ENCODE measurements at regions of chr11 and their contacts with region 1.

Region 1: GRCh38 chr11:47642099-47642855 is at the start of gene MTCH2:
- DNase-seq: peak; percentile 95 to 97 (median 96)
- H3K4me3 ChIP-seq: peak within 1 kb of the TSS; percentile 63
- H3K27ac ChIP-seq: peak within 1 kb of the TSS; percentile 85 to 88
- H3K4me1 ChIP-seq: peaks cover 7% of the 10 kb centered on the region
- H3K27me3 ChIP-seq: no peaks in the 10 kb centered on the region
- CTCF ChIP-seq: peak in 2 of 3 donors; percentile 19 to 62
- EP300 ChIP-seq: peak; percentile 56
- POLR2A ChIP-seq: peak; percentile 64
- total RNA-seq, gene MTCH2: 13.0 to 44.1 (median 38.8) TPM

Region 2: DNA sequence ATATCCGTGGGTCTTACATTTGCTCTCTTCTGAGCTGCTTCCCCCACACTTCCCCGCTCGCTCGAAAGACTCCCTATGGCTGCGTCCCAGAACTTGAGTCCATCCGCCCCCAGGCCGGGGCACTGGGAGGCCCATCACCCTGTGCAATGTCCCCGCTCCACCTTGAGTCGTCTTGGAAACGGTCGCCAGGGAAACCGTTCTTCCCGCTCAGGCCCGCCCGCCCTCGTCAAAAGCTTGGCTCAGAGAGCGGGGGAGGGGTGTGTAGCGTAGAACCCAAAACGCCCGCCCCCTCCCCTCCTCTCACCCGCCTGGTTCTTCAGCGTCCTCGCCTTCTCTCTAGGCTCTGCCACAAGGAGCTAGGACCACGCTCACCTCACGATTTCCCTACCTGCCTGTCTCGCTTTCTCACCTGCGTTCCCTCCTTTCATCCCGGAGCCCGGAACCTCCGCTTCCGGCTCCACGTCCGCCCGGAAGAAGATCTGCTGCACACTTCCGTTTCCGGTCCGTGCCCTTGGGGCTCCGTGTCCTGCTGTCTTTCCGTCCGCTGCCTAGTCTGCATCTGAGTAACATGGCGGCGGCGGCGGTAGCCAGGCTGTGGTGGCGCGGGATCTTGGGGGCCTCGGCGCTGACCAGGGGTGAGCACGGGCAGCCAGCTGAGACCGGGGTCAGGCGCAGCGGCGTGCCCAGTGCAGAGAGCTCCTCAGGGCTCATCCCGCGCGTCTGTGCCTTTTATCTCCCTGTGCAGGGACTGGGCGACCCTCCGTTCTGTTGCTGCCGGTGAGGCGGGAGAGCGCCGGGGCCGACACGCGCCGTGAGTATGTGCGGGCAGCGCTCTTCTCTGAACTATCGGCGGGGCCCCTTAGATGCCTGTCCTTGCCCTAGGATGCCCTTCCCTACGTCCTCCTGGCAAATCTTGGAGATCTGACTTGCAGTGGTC is 63.5 kb before region 1 on chr11 and contains the starts of genes KBTBD4 and NDUFS3:
- intact Hi-C with region 1: no loop called
- DNase-seq: peak; percentile 81 to 91 (median 90)
- H3K4me3 ChIP-seq: peak within 1 kb of the TSS; percentile 86
- H3K27ac ChIP-seq: peak within 1 kb of the TSS; percentile 74 to 84
- H3K4me1 ChIP-seq: peaks cover 6% of the 10 kb centered on the region
- H3K27me3 ChIP-seq: no peaks in the 10 kb centered on the region
- CTCF ChIP-seq: no peak
- EP300 ChIP-seq: no peak
- POLR2A ChIP-seq: peak; percentile 75
- total RNA-seq, gene KBTBD4: 14.4 to 21.6 (median 17.9) TPM
- total RNA-seq, gene NDUFS3: 40.8 to 73.2 (median 60.2) TPM

Region 3: GRCh38 chr11:47675851-47676250 is 33.6 kb after region 1 on chr11:
- intact Hi-C with region 1: no loop called
- DNase-seq: no peak
- H3K4me3 ChIP-seq: no peak overlapping the region
- H3K27ac ChIP-seq: no peak overlapping the region
- H3K4me1 ChIP-seq: no peaks in the 10 kb centered on the region
- H3K27me3 ChIP-seq: no peaks in the 10 kb centered on the region
- CTCF ChIP-seq: no peak
- EP300 ChIP-seq: no peak
- POLR2A ChIP-seq: no peak

Region 4: GRCh38 chr11:47715082-47715669 is 72.9 kb after region 1 on chr11 and contains the start of gene AGBL2:
- intact Hi-C with region 1: loop called in 1 of 4 experiments (anchors 10 kb)
- DNase-seq: peak; percentile 62 to 81 (median 68)
- H3K4me3 ChIP-seq: peak within 1 kb of the TSS; percentile 79
- H3K27ac ChIP-seq: peak within 1 kb of the TSS; percentile 9 to 39
- H3K4me1 ChIP-seq: no peaks in the 10 kb centered on the region
- H3K27me3 ChIP-seq: no peaks in the 10 kb centered on the region
- CTCF ChIP-seq: no peak
- EP300 ChIP-seq: no peak
- POLR2A ChIP-seq: peak; percentile 40
- total RNA-seq, gene AGBL2: 0.83 to 13.1 (median 2.8) TPM

Region 5: GRCh38 chr11:47766305-47767227 is 124.3 kb after region 1 on chr11:
- intact Hi-C with region 1: loop called in 1 of 4 experiments (anchors 10 kb)
- DNase-seq: peak; percentile 60 to 77 (median 71)
- H3K4me3 ChIP-seq: peak overlapping the region; percentile 72
- H3K27ac ChIP-seq: peak overlapping the region; percentile 98
- H3K4me1 ChIP-seq: peaks cover 3% of the 10 kb centered on the region
- H3K27me3 ChIP-seq: no peaks in the 10 kb centered on the region
- CTCF ChIP-seq: peak in 1 of 3 donors; percentile 12
- EP300 ChIP-seq: no peak
- POLR2A ChIP-seq: peak; percentile 17

Measured in ovary (tissue), 10 donors.